Activated CD8-positive, alpha-beta memory T cell treated with anti-CD3 and anti-CD28 coated beads, Interleukin-2, amount 10 ng/mL, durations not matched to agents 7 days and 5 days (primary cell): ENCODE measurements at regions of chr13 and their contacts with region 1.

Region 1: GRCh38 chr13:77779552-77780272 is 82.2 kb downstream of the SLAIN1 start:
- DNase-seq: peak; percentile 48
- ATAC-seq: peak; percentile 69
- H3K4me3 Mint-ChIP-seq: no peak overlapping the region
- H3K27ac Mint-ChIP-seq: peak overlapping the region; percentile 6
- H3K4me1 Mint-ChIP-seq: peaks cover 13% of the 10 kb centered on the region
- H3K27me3 Mint-ChIP-seq: no peaks in the 10 kb centered on the region

Region 2: GRCh38 chr13:77637588-77637987 is 142.1 kb before region 1 on chr13:
- CTCF ChIA-PET with region 1: no interaction called
- DNase-seq: no peak
- ATAC-seq: no peak
- H3K4me3 Mint-ChIP-seq: no peak overlapping the region
- H3K27ac Mint-ChIP-seq: no peak overlapping the region
- H3K4me1 Mint-ChIP-seq: no peaks in the 10 kb centered on the region
- H3K27me3 Mint-ChIP-seq: no peaks in the 10 kb centered on the region

Region 3: GRCh38 chr13:77737583-77738200 is 42.0 kb before region 1 on chr13:
- CTCF ChIA-PET with region 1: no interaction called
- DNase-seq: no peak
- ATAC-seq: no peak
- H3K4me3 Mint-ChIP-seq: no peak overlapping the region
- H3K27ac Mint-ChIP-seq: no peak overlapping the region
- H3K4me1 Mint-ChIP-seq: peaks cover 15% of the 10 kb centered on the region
- H3K27me3 Mint-ChIP-seq: no peaks in the 10 kb centered on the region

Region 4: GRCh38 chr13:78121459-78122348 is 342.0 kb after region 1 on chr13:
- CTCF ChIA-PET with region 1: interaction called, 13 read pairs
- DNase-seq: peak; percentile 44
- ATAC-seq: no peak
- H3K4me3 Mint-ChIP-seq: no peak overlapping the region
- H3K27ac Mint-ChIP-seq: no peak overlapping the region
- H3K4me1 Mint-ChIP-seq: no peaks in the 10 kb centered on the region
- H3K27me3 Mint-ChIP-seq: peaks cover 21% of the 10 kb centered on the region